SK-N-SH (cell line): ENCODE measurements at regions of chr15 and their contacts with region 1.

Region 1: DNA sequence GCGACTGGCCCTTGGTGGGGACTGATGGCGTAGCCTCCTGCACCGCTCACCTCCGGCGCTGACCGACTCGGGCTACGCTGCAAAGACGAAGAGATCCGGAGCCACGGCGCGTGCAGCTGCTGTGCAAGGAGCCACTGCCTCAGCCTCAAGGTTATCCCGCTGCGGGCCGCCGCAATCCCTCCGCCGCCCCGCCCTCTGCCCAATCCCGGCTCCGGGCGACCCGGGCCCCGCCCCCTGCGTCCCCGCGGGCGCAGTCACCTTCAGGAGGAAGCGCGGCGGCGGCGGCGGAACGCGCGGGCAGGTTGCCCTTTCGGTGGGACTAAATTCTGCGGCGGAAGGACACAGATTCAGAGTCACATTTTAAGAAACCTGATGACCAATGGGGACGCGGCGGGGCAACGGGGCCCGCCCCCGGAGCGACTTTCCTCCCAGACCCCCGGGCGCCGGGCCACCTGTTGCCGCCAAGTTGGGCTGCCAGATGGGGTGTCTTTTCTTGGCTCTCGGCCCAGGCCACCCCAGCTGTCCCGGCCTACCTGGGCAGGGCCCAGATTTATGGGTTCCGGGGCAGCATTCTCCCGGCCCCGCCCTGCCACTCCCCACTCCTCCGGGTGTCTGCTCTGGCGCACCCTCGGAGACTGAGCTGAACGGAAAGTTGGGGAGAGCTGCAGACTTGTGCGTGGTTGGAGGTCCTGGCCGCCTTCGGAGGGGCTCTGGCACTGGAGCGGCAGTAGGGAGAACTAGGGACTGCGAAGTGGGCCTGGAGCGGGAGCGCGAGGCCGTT is at the start of gene PKM:
- DNase-seq: peak; percentile 96
- H3K4me3 ChIP-seq: peak within 1 kb of the TSS; percentile 88 to 90
- H3K27ac ChIP-seq: peak within 1 kb of the TSS; percentile 89 to 96
- H3K4me1 ChIP-seq: peaks cover 18 to 35% of the 10 kb centered on the region in 2 experiments; a peak in 3 of 4 replicates
- H3K27me3 ChIP-seq: no peaks in the 10 kb centered on the region
- CTCF ChIP-seq: no peak
- EP300 ChIP-seq: peak; percentile 2 to 56; a peak in 1 of 4 replicates
- RAD21 ChIP-seq: no peak
- polyA plus RNA-seq, gene PKM: 1,453 and 1,539 TPM in 2 replicates

Region 2: GRCh38 chr15:72078887-72079286 is 152.4 kb before region 1 on chr15:
- CTCF ChIA-PET with region 1: no interaction called
- POLR2A ChIA-PET with region 1: no interaction called
- DNase-seq: no peak
- H3K4me3 ChIP-seq: no peak overlapping the region
- H3K27ac ChIP-seq: no peak overlapping the region
- H3K4me1 ChIP-seq: no peaks in the 10 kb centered on the region
- H3K27me3 ChIP-seq: no peaks in the 10 kb centered on the region
- CTCF ChIP-seq: no peak
- EP300 ChIP-seq: no peak
- RAD21 ChIP-seq: no peak

Region 3: DNA sequence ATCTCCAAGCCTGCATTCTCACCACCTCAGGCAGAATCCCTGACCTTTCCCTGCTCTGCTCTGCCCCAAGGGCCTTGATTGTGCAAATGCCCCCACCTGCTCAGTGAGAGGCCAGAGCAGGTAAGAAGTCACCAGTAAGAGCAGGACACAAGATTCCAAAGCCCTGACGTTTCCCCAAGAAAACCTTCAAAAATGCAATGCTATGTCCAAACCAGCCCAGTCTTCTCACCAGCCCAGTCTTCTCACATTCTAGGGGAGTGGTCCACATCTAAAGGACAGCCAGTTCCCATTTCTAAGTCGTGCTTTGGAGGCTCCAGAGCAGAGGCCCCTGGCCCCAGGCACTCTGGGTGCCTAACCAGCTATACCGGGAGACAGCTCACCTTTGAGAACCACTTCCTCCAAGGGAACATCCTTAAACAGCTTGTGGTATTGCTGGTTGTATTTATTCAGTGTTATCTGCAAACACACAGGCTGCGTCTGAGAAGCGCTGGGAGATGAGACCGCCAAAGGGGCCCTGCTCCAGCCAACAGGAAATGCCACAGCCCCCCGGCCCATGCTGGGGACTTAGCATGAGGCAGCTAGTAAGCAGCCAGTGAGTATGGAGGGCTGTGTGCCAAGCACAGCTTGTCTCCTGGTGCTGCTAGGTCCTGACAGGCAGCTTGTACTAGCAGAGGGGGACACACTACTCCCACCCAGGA is 63.0 kb before region 1 on chr15:
- CTCF ChIA-PET with region 1: no interaction called
- POLR2A ChIA-PET with region 1: no interaction called
- DNase-seq: no peak
- H3K4me3 ChIP-seq: no peak overlapping the region
- H3K27ac ChIP-seq: no peak overlapping the region
- H3K4me1 ChIP-seq: peaks cover 0 to 6% of the 10 kb centered on the region in 2 experiments; a peak in 1 of 4 replicates
- H3K27me3 ChIP-seq: no peaks in the 10 kb centered on the region
- CTCF ChIP-seq: no peak
- EP300 ChIP-seq: no peak
- RAD21 ChIP-seq: no peak

Region 4: GRCh38 chr15:72199711-72200212 is 31.5 kb before region 1 on chr15:
- CTCF ChIA-PET with region 1: interaction called, 35 read pairs
- POLR2A ChIA-PET with region 1: interaction called, 17 read pairs
- DNase-seq: peak; percentile 87
- H3K4me3 ChIP-seq: no peak overlapping the region
- H3K27ac ChIP-seq: peak overlapping the region; percentile 47 to 66; a peak in 2 of 4 replicates
- H3K4me1 ChIP-seq: peaks cover 23 to 34% of the 10 kb centered on the region in 2 experiments
- H3K27me3 ChIP-seq: no peaks in the 10 kb centered on the region
- CTCF ChIP-seq: peak; percentile 88
- EP300 ChIP-seq: no peak
- RAD21 ChIP-seq: peak; percentile 92

Region 5: GRCh38 chr15:72206677-72207000 is 24.6 kb before region 1 on chr15:
- CTCF ChIA-PET with region 1: interaction called, 35 read pairs
- POLR2A ChIA-PET with region 1: interaction called, 15 read pairs
- DNase-seq: no peak
- H3K4me3 ChIP-seq: no peak overlapping the region
- H3K27ac ChIP-seq: no peak overlapping the region
- H3K4me1 ChIP-seq: peaks cover 30 to 35% of the 10 kb centered on the region in 2 experiments
- H3K27me3 ChIP-seq: no peaks in the 10 kb centered on the region
- CTCF ChIP-seq: no peak
- EP300 ChIP-seq: no peak
- RAD21 ChIP-seq: no peak

Region 6: DNA sequence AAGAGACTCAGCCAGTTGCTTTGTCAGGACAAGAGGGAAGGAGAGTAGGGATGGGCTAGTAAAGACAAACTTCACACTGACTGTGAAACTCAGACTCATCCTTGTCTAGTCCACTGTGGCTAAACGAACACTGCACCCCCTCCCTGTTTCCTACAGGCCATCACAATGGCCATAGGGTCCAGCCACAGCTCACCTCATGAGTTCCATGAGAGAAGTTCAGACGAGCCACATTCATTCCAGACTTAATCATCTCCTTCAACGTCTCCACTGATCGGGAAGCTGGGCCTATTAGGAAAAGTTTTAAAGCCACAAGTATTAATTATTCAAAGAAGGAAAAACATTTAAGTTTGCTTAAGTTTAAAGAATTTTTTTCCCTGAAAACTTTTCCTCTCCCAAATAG is 14.0 kb before region 1 on chr15:
- CTCF ChIA-PET with region 1: interaction called, 23 read pairs
- POLR2A ChIA-PET with region 1: interaction called, 28 read pairs
- DNase-seq: no peak
- H3K4me3 ChIP-seq: no peak overlapping the region
- H3K27ac ChIP-seq: peak overlapping the region in 1 of 2 experiments; percentile 44; a peak in 2 of 4 replicates
- H3K4me1 ChIP-seq: peaks cover 5 to 31% of the 10 kb centered on the region in 2 experiments
- H3K27me3 ChIP-seq: no peaks in the 10 kb centered on the region
- CTCF ChIP-seq: no peak
- EP300 ChIP-seq: no peak
- RAD21 ChIP-seq: no peak

Region 7: GRCh38 chr15:72272213-72273002 is 41.2 kb after region 1 on chr15 and contains the start of gene PARP6:
- CTCF ChIA-PET with region 1: interaction called, 6 read pairs
- POLR2A ChIA-PET with region 1: interaction called, 11 read pairs
- DNase-seq: peak; percentile 99
- H3K4me3 ChIP-seq: peak within 1 kb of the TSS; percentile 87 to 91
- H3K27ac ChIP-seq: peak within 1 kb of the TSS; percentile 69 to 77
- H3K4me1 ChIP-seq: peaks cover 9 to 12% of the 10 kb centered on the region in 2 experiments; a peak in 3 of 4 replicates
- H3K27me3 ChIP-seq: no peaks in the 10 kb centered on the region
- CTCF ChIP-seq: peak; percentile 73
- EP300 ChIP-seq: no peak; a peak in 1 of 4 replicates
- RAD21 ChIP-seq: 0 out of 2 replicates have a peak, but pooled peaks have one; percentile 12
- polyA plus RNA-seq, gene PARP6: 57.7 and 76.6 TPM in 2 replicates